Activated naive CD4-positive, alpha-beta T cell treated with anti-CD3 and anti-CD28 coated beads for 36 hours (primary cell): ENCODE measurements at regions of chr20 and their contacts with region 1.

Region 1: DNA sequence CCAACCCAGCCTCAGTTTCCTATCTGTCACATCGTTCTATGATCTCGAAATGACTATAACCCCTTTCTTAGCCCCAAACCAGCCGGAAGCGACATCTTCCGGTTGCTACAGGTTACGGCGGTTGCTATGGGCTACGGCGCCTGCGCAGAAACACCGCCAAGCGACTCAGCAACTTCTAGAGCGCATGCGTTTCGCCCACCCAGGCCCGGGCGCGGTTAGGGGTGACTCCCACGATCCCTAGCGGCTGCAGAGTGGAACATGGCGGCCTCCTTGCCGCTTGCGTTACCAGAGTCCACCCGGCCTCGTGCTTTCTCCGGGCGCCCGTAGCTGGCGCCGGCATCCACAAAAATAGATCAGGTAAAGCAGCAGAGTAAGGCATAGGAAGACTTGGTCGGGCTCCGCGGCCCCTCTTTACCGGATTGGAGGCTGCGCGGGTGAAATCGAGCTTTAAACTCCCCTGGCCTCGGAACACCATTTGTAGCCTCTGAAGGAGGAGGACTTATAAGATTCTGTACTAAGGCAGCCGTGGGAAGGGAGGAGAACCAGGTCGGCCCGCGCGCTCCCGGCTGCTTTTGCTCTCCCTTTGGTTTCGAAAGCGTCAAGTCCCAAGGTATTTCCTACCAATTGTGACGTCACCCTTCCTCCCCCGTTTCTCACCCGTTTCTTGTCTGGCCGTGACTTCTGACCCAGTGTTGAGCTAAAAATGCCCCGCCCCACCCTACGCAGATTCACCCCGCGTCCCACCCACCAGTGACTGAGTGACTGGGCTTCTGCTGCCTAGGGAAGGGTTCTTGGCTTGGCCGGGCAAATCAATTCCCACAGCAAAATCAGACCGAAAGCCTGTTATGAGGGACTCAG is 3.5 kb downstream of the SDCBP2 start:
- DNase-seq: peak; percentile 99
- H3K4me3 Mint-ChIP-seq: no peak overlapping the region
- H3K27ac Mint-ChIP-seq: no peak overlapping the region
- H3K4me1 Mint-ChIP-seq: peaks cover 28% of the 10 kb centered on the region
- H3K27me3 Mint-ChIP-seq: no peaks in the 10 kb centered on the region

Region 2: DNA sequence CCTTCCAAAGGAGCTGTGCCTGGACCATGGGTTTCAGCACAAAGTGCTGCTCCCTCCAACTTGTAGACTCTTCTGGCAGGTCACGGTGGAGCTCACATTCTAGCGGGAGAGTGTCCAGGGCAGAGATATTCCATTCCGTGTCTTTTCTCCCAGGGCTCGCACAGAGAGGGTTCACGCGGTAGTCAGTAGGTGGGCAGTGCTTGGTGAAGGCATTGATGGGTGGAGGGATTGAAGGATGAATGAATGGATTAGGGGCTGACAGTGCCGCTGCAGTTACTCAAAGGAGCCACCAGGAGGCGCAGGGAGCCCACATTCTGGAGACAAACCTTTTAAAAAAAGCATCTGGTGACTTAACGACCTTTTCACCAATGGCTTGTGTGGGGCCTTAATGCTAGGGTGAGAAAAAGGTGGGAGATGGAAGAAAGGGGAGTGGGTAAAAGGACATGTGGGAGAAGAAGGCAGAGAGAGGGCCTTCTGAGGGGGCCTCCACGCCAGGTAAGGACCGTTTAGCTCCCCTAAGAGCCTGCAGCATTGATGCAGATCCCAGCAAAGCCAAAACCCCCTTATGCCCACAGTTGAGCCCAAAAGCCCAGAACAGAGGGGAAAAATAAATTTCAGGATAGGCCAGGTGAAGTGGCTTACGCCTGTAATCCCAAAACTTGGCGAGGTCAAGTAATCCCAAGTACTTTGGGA is 509.3 kb before region 1 on chr20:
- CTCF ChIA-PET with region 1: no interaction called
- intact Hi-C with region 1: no loop called
- DNase-seq: peak; percentile 76
- H3K4me3 Mint-ChIP-seq: no peak overlapping the region
- H3K27ac Mint-ChIP-seq: no peak overlapping the region
- H3K4me1 Mint-ChIP-seq: peaks cover 3% of the 10 kb centered on the region
- H3K27me3 Mint-ChIP-seq: peaks cover 8% of the 10 kb centered on the region

Region 3: DNA sequence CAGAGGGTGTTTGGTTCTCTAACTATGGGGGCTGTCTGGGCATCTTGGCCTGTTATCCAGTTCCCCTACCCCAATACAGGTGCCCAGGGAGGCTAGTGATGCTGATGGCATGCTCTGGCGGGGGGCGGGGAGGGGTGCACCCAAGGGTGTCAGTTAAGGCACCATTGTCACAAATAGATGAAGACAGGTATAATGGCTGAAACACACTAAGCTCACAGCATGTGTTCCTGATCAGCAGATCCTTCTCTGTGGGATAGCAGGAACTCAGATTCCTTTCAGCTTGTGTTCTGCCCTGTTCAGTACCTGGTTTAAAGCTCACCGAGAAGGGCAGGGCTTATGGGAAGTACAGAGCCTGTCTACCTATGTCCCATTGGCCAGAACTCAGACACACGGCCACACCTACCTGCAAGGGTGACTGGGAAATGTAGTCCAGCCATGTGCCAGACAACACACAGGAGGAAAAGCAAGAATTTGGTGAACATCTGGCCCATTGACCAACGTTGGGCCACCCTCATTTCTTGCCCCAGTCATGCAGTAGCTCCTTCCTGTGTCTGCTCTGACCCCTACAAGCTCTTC is 319.9 kb before region 1 on chr20:
- CTCF ChIA-PET with region 1: no interaction called
- intact Hi-C with region 1: no loop called
- DNase-seq: peak; percentile 48
- H3K4me3 Mint-ChIP-seq: no peak overlapping the region
- H3K27ac Mint-ChIP-seq: no peak overlapping the region
- H3K4me1 Mint-ChIP-seq: peaks cover 7% of the 10 kb centered on the region
- H3K27me3 Mint-ChIP-seq: peaks cover 30% of the 10 kb centered on the region

Region 4: GRCh38 chr20:1086277-1087213 is 238.9 kb before region 1 on chr20:
- CTCF ChIA-PET with region 1: no interaction called
- intact Hi-C with region 1: loop called (anchors 1 kb)
- DNase-seq: peak; percentile 51
- H3K4me3 Mint-ChIP-seq: no peak overlapping the region
- H3K27ac Mint-ChIP-seq: peak overlapping the region; percentile 87
- H3K4me1 Mint-ChIP-seq: peaks cover 32% of the 10 kb centered on the region
- H3K27me3 Mint-ChIP-seq: no peaks in the 10 kb centered on the region

Region 5: GRCh38 chr20:1336699-1337367 is 11.4 kb after region 1 on chr20:
- CTCF ChIA-PET with region 1: no interaction called
- intact Hi-C with region 1: no loop called
- DNase-seq: peak; percentile 30
- H3K4me3 Mint-ChIP-seq: peak overlapping the region; percentile 1
- H3K27ac Mint-ChIP-seq: peak overlapping the region; percentile 77
- H3K4me1 Mint-ChIP-seq: peaks cover 35% of the 10 kb centered on the region
- H3K27me3 Mint-ChIP-seq: no peaks in the 10 kb centered on the region

Region 6: GRCh38 chr20:1357921-1358671 is 32.7 kb after region 1 on chr20:
- CTCF ChIA-PET with region 1: interaction called, 4 read pairs
- intact Hi-C with region 1: loop called (anchors 1 kb)
- DNase-seq: peak; percentile 60
- H3K4me3 Mint-ChIP-seq: peak overlapping the region; percentile 31
- H3K27ac Mint-ChIP-seq: peak overlapping the region; percentile 77
- H3K4me1 Mint-ChIP-seq: peaks cover 54% of the 10 kb centered on the region
- H3K27me3 Mint-ChIP-seq: no peaks in the 10 kb centered on the region

Region 7: DNA sequence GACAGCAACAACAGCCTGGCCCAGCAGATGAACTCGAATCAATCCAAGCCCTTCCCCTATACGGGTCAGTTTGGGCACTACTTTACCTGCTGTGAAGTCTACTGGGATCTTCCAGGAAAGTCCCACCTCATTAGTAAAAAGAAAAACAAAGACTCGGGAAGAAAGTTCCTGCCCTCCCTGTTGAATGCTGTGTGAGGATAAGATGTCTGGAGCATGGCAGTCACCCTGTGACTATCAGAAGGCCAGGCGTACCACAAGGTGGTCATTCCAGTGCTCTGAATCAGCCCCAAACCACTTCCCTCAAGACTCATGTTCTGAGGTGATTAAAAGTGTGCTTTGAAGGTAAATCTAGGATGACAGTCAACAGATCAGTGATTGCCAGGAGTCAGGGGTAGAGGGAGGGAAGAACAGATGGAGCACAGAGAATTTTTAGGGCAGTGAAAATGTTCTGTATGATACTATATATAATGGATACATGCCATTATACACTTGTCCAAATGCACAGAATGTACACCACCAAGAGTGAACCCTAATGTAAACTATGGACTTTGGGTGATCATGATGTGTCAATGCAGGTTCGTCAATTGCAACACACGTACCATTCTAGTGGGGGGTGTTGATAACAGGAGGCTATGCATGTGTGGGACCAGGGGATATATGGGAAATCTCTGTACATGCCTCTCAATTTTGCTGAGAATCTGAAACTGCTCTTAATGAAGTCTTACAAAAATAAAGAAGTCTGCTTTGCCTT is 52.8 kb after region 1 on chr20:
- CTCF ChIA-PET with region 1: no interaction called
- intact Hi-C with region 1: loop called (anchors 1 kb)
- DNase-seq: peak; percentile 48
- H3K4me3 Mint-ChIP-seq: no peak overlapping the region
- H3K27ac Mint-ChIP-seq: peak overlapping the region; percentile 89
- H3K4me1 Mint-ChIP-seq: peaks cover 81% of the 10 kb centered on the region
- H3K27me3 Mint-ChIP-seq: no peaks in the 10 kb centered on the region

Region 8: GRCh38 chr20:1437235-1437904 is 112.0 kb after region 1 on chr20:
- CTCF ChIA-PET with region 1: interaction called, 7 read pairs
- intact Hi-C with region 1: loop called (anchors 1 kb)
- DNase-seq: peak; percentile 91
- H3K4me3 Mint-ChIP-seq: no peak overlapping the region
- H3K27ac Mint-ChIP-seq: no peak overlapping the region
- H3K4me1 Mint-ChIP-seq: peaks cover 30% of the 10 kb centered on the region
- H3K27me3 Mint-ChIP-seq: no peaks in the 10 kb centered on the region

Region 9: DNA sequence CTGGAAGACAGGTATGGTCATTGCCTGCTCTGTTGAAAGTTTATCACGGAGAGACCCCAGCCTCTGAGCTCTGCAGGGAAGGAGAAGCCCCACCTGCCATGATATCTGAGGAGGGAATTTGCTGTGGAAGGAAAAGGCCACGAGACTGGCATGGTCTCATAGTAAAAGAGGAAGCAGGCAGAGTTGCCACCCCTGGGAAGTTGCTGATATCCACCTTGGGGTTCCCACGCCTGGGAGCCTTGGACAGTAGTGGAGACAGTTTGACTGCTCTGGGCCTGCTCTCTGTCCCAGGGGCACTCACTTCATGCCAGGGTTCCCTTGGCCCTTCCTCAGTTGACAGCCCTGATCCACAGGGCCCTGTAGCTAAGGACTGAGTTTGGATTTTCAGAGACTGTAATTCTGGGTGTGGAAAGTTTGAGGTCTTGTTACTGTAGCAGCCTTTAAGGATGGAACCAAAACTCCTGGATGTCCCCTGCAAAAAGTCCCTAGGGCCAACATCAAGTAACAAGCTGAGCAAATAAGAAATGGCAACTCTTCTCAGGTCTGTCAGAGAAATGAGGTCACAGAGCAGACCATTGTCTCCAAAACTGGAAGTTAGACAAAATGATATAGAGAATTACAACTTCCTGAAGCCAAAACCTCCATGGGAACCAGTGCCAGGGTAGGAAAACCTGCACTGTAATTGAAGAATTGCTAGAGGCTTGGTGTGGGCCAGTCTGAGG is 301.3 kb after region 1 on chr20:
- CTCF ChIA-PET with region 1: no interaction called
- intact Hi-C with region 1: loop called (anchors 1 kb)
- DNase-seq: peak; percentile 18
- H3K4me3 Mint-ChIP-seq: no peak overlapping the region
- H3K27ac Mint-ChIP-seq: peak overlapping the region; percentile 89
- H3K4me1 Mint-ChIP-seq: peaks cover 94% of the 10 kb centered on the region
- H3K27me3 Mint-ChIP-seq: no peaks in the 10 kb centered on the region